Activated B cell treated with CpG ODN at 0.5 μM for 24 hours (primary cell): ENCODE measurements at regions of chr11 and their contacts with region 1.

Region 1: DNA sequence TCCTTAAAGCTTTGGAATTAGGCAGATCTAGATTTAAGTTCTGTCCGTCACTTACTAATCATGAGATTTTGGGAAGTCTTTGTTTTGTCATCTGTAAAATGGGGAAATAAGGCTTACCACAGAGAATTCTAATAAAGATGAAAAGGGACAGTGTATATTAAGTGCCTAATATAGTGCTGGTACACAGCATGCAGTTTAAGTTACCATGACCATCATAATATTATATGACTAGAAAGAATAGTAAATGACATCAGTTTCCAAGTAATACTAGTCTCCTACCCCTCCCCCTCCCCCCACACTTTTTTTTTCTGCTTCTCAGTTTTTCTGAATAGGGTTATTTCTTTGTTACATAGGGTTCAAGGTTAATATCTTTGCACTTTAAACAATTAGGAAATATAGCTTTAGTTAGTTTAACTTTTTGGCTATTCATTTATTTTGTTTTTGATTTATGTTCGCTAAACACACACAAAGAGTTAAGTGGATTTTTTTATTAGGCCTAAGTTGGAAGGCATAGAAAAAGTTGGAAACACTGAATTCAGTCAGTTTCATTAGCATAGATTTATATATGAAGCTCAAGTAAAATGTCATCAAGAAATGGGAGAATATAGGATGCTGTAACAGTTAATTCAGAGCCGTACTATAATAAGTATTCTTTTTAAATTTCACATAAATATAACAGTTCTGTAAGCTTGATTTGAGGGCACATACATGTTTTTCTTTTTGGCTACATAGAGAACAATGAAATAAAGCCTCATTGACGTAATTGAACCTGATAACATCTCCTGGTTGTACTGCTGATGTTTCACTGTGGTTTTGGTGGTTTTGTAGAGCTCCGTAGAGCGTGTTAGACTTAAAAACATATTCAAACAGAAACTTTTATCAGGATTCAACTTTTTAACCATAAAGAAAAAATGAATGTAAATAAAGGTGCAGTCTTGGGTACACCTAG is 121.2 kb downstream of the PDE3B start:
- DNase-seq: no peak
- ATAC-seq: peak; percentile 87
- H3K4me3 Mint-ChIP-seq: peak overlapping the region; percentile 38
- H3K27ac Mint-ChIP-seq: peak overlapping the region; percentile 74
- H3K4me1 Mint-ChIP-seq: peaks cover 34% of the 10 kb centered on the region
- H3K27me3 Mint-ChIP-seq: no peaks in the 10 kb centered on the region
- CTCF ChIP-seq: no peak

Region 2: DNA sequence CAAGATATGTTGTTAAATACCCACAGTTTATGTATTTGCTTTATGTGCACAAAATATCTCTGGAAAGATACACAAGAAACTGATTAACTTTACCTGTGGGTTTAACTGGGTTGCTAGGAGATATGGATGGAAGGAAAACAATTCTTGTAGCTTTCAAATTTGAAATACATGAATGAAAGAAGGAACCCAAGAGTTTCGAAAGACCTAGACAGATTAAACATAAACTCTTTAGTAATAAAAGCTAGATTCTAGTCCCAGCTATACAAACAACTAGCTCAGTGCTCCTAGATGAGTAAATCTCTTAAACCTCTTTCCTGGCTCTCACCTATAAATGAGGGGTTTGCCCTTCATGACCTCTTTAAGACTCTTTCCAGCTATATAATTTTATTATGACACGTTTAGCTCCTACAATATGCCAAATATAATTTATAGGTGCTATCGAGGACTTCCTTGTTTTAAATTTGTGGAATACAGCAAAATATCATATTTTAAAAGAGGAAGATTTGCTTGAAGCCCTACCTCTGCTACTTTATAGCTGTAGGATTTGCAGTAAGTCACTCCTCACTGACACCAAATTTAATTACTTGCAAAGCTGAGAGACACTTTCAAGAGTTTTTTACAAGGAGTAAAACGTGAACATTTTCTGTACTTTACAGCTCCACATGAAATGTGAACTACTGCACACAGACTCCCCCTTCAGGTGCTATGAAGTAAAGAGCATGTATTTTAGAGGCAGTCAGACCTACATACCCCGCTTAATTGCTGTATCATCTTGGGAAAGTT is 456.5 kb before region 1 on chr11:
- CTCF ChIA-PET with region 1: interaction called, 3 read pairs
- POLR2A ChIA-PET with region 1: no interaction called
- intact Hi-C with region 1: loop called (anchors 10 kb)
- DNase-seq: no peak
- ATAC-seq: peak; percentile 51
- H3K4me3 Mint-ChIP-seq: no peak overlapping the region
- H3K27ac Mint-ChIP-seq: no peak overlapping the region
- H3K4me1 Mint-ChIP-seq: peaks cover 43% of the 10 kb centered on the region
- H3K27me3 Mint-ChIP-seq: no peaks in the 10 kb centered on the region
- CTCF ChIP-seq: peak; percentile 58

Region 3: DNA sequence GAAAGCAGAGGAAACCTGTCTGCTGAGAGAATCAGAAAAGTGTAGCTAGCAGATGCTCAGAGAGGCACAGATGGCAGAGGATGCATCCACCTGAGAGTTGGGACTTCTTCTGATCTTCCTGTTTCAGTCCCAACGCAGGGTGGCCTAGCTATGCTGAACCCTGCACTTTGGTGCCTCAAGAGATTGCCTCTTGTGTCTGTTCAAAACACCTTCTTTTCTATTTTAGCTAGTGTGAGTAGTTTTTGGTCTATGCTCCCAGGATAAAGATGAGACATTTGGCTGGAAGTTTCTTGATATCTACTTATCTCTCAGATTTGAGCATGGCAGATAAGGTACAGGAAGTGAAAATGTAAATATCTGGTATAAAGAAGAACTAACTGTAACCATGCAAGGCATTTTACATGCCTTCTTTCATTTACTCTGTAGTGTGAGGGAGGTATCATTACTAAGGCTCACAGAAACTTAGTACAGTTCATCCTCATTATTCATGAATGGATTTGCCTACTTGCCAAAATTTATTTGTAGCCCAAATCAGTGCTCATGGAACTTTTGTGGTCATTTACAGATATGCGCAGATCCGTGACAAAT is 197.7 kb before region 1 on chr11:
- CTCF ChIA-PET with region 1: no interaction called
- POLR2A ChIA-PET with region 1: interaction called, 10 read pairs
- intact Hi-C with region 1: no loop called
- DNase-seq: no peak
- ATAC-seq: peak; percentile 25
- H3K4me3 Mint-ChIP-seq: peak overlapping the region; percentile 5
- H3K27ac Mint-ChIP-seq: peak overlapping the region; percentile 63
- H3K4me1 Mint-ChIP-seq: peaks cover 30% of the 10 kb centered on the region
- H3K27me3 Mint-ChIP-seq: peaks cover 5% of the 10 kb centered on the region
- CTCF ChIP-seq: no peak

Region 4: DNA sequence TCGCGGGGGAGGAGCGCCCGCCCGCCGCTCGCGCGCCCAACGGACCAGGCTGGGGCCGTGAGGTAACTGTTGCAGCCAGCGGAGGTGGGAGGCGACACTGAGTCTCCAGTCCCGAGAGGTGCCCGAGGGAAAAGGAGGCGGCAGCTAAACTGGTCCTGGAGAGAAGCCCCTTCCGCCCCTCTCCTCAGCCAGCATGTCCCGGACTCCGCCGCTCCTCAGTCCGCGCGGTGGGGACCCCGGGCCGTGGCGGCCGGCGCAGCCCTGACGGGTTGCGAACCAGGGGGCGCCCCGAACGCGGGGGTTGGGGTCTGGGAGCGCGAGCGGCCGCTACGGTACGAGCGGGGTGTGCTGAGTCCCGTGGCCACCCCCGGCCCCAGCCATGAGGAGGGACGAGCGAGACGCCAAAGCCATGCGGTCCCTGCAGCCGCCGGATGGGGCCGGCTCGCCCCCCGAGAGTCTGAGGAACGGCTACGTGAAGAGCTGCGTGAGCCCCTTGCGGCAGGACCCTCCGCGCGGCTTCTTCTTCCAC is 121.1 kb before region 1 on chr11 and contains the start of gene PDE3B:
- CTCF ChIA-PET with region 1: interaction called, 6 read pairs
- POLR2A ChIA-PET with region 1: interaction called, 28 read pairs
- intact Hi-C with region 1: loop called (anchors 2 kb)
- DNase-seq: peak; percentile 56
- ATAC-seq: peak; percentile 72
- H3K4me3 Mint-ChIP-seq: peak within 1 kb of the TSS; percentile 86
- H3K27ac Mint-ChIP-seq: no peak within 1 kb of the TSS
- H3K4me1 Mint-ChIP-seq: peaks cover 10% of the 10 kb centered on the region
- H3K27me3 Mint-ChIP-seq: peaks cover 17% of the 10 kb centered on the region
- CTCF ChIP-seq: no peak
- total RNA-seq, gene PDE3B: 11.3 and 13.4 TPM in 2 replicates

Region 5: DNA sequence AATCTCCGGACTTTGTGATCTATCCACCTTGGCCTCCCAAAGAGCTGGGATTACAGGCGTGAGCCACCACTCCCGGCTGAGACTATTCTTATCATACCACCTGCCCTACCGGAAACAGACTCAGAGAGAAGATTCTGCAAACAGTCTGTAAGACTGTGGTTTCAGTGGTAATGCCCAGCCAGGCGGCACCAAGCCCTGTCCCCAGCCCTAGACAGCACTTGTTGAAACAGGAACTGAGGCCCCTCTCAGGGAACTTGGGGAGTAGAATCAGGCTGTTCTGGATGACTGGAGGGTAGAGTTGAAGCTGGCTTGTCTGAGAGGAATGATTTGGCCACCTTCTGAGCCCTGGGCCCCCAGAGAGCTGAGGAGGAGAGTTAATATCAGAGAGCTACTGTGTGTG is 348.5 kb after region 1 on chr11:
- CTCF ChIA-PET with region 1: no interaction called
- POLR2A ChIA-PET with region 1: no interaction called
- intact Hi-C with region 1: loop called (anchors 1 kb)
- DNase-seq: peak; percentile 54
- ATAC-seq: peak; percentile 94
- H3K4me3 Mint-ChIP-seq: peak overlapping the region; percentile 70
- H3K27ac Mint-ChIP-seq: peak overlapping the region; percentile 79
- H3K4me1 Mint-ChIP-seq: peaks cover 77% of the 10 kb centered on the region
- H3K27me3 Mint-ChIP-seq: peaks cover 13% of the 10 kb centered on the region
- CTCF ChIP-seq: no peak